Calu3 (cell line): ENCODE measurements at regions of chr3 and their contacts with region 1.

Region 1: DNA sequence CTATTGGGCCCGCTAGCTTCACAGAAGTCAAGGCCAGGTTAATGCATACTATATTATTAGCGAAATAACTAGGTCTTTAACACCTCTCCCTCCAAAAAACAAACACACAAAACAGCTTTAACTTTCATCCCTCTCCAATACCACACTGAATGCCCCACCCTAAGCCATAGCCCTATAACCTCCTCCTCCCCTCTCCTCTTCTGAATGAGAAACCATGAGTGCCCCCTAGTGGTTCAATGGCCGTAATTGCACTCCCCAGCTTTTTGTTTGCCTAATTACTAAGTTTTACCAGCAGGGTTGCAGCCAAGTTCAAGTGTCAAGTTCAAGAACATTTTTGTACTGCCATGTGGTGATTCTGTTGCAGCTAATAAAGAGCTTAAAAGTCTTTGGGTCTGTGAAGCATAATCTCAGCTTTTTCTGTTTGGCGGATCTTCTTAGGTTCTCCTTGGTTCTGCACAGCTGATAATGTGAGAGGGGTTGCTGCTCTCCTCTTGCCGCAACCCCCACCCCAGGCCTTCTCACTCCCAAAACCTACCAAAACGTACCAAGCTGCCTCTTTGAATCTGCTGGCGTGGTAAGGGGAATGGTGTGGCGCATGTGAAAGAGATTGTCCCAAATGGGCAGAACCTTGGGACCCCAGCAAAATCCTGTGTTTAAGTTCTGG is 57.9 kb downstream of the RPL22L1 start:
- DNase-seq: peak; percentile 86
- H3K4me3 Mint-ChIP-seq: no peak overlapping the region
- H3K27ac Mint-ChIP-seq: peak overlapping the region; percentile 16
- H3K4me1 Mint-ChIP-seq: peaks cover 46% of the 10 kb centered on the region
- H3K27me3 Mint-ChIP-seq: no peaks in the 10 kb centered on the region
- CTCF ChIP-seq: peak; percentile 99

Region 2: DNA sequence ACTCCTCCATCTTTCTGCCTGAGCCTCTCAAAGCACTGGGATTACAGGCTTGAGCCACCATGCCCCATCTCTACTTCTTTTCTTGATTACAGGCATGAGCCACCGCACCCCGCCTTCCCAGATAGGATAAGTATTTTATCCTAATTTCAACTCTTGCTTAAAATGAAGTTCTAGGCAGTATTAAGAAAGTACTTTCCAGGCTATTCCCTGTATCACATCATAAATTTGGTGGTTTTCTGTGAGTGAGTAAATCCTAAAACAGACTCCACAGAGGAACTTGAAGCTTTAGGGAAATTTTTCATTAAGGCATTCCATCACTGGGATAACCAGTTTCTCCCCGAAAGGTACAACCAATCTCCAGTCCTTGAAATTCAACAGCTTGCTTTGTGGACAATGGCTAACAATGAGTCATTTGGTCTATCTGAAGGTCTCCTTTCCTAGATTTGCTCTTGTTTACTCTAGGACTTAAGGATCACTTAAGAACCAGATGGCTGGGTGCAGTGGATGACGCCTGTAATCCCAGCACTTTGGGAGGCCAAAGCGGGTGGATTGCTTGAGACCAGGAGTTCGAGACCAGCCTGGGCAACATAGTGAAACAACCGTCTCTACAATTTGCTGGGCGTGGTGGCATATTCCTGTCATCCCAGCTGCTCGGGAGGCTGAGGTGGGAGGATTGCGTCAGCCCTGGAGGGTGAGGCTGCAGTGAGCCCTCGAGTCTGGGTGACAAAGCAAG is 504.2 kb before region 1 on chr3:
- CTCF ChIA-PET with region 1: interaction called, 3 read pairs
- intact Hi-C with region 1: loop called (anchors 5 kb)
- DNase-seq: peak; percentile 62
- H3K4me3 Mint-ChIP-seq: peak overlapping the region; percentile 52
- H3K27ac Mint-ChIP-seq: peak overlapping the region; percentile 96
- H3K4me1 Mint-ChIP-seq: peaks cover 16% of the 10 kb centered on the region
- H3K27me3 Mint-ChIP-seq: no peaks in the 10 kb centered on the region
- CTCF ChIP-seq: no peak

Region 3: DNA sequence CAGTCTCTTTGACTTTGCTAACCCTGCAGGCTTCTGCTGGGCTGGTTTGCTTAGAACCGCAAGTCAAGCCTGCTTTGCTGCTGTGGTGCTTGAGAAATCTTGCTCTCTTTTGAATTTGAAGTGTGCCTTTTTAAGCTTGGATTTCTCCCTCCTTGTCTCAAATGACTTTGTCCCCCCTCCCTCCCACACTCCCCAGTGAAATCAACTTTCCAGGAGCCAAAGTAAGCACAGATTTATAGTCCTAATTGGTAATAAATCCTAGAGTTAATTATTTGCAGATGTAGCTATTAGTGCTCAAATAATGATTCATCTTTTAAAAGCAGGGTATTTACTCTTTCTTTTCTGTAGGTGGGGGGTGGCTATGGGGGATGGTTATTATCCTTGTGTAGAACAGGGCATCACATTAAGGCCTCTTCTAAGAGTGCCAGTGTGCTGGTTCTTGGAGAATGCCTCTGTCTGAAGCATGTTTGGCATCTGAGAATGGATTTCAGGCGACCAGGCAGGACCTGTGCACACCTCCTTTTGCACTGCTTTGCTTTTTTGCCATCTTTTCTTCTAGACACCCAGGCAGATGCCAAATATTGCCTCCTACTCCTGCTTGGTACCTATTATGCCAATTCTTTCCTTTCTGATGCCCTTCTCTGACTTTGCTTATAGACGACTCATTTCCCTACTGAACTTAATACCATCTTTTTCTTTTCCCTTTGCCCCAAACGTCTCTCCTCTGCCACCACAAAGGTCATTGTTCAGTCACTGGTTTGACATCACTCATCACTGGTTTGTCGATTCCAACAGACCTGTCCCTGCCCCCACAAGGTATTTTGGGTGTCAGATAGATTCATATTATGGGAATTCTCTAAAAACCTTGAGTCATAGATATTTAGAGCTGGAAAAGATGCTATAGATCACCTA is 342.7 kb before region 1 on chr3:
- CTCF ChIA-PET with region 1: interaction called, 19 read pairs
- intact Hi-C with region 1: no loop called
- DNase-seq: peak; percentile 40
- H3K4me3 Mint-ChIP-seq: no peak overlapping the region
- H3K27ac Mint-ChIP-seq: no peak overlapping the region
- H3K4me1 Mint-ChIP-seq: peaks cover 41% of the 10 kb centered on the region
- H3K27me3 Mint-ChIP-seq: no peaks in the 10 kb centered on the region
- CTCF ChIP-seq: no peak

Region 4: DNA sequence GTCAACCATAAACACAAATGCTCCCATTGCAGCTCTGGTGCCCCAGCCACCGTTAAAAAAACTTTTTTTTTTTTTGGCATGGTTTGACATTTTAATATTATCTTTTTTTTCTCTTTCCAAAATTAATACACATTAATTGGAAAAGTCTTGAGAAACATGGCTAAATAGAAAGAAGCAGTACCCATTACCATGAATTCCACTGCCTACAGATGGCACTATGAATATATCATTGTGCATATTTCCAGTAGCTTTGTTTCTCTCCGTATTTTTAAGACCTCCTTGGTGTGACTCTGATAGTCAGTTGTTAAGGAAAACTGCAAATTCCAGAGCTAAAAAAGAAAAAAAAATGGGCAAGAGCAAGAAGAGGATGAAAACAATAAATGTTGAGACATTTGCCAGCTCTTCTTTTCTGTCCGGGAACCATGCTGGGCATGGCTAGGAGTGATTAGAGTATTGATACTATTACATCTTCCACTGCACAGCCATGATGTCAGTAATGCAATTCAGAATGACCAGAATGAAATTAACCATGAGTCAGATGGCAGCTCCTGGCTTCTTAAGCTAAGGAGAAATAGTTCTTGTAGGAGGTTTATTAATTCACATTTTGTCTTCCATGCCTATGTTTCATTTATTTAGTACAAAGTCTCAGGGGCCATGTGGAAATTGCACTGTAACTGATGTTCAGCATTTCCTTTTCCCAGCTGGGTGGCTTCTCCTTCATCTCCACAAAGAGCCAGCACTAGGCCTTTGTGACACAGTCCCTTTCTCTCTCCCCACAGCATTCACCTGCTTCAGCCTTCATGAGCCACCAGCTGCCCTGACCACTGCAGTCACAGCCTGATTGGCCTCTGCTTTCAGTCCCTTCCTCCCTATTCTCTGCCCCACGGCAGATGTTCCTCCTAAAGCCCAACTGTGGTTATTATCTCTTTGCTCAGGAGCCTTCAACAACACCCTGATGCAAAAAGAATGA is 258.0 kb before region 1 on chr3:
- CTCF ChIA-PET with region 1: interaction called, 8 read pairs
- intact Hi-C with region 1: loop called (anchors 5 kb)
- DNase-seq: no peak
- H3K4me3 Mint-ChIP-seq: no peak overlapping the region
- H3K27ac Mint-ChIP-seq: no peak overlapping the region
- H3K4me1 Mint-ChIP-seq: no peaks in the 10 kb centered on the region
- H3K27me3 Mint-ChIP-seq: peaks cover 31% of the 10 kb centered on the region
- CTCF ChIP-seq: no peak

Region 5: DNA sequence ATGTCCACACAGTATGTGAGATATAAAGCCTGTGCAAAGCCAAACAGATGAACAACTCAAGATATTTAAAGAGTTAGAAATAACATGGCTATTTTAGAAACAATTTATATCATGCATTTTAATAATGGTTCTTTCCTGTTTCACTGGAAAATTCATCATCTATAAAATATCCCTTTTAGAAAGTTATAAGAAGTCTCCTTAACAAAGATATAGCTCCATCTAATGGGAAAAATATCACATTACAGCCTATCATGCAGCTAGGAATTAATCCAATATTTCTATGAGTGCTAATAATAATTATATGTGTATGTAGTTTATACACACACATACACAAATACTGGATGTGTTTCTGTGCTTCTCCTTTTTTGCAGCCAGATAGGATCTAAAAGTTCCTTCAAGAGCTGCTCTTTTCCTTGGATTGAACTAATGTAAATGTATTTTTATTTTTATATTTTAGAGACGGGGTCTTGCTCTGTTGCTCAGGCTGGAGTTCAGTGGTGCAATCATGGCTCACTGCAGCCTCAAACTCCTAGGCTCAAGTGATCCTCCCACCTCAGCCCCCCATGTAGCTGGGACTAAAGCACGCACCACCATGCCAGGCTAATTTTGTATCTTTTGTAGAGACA is 36.3 kb after region 1 on chr3:
- CTCF ChIA-PET with region 1: interaction called, 10 read pairs
- intact Hi-C with region 1: no loop called
- DNase-seq: no peak
- H3K4me3 Mint-ChIP-seq: no peak overlapping the region
- H3K27ac Mint-ChIP-seq: no peak overlapping the region
- H3K4me1 Mint-ChIP-seq: no peaks in the 10 kb centered on the region
- H3K27me3 Mint-ChIP-seq: no peaks in the 10 kb centered on the region
- CTCF ChIP-seq: peak; percentile 53